IMR-90 (cell line): ENCODE measurements at regions of chr5 and their contacts with region 1.

Region 1: GRCh38 chr5:83430130-83431010 is 41.2 kb upstream of the VCAN start:
- DNase-seq: peak; percentile 69
- ATAC-seq: peak; percentile 89
- H3K4me3 ChIP-seq: no peak overlapping the region
- H3K27ac ChIP-seq: no peak overlapping the region
- H3K4me1 ChIP-seq: no peaks in the 10 kb centered on the region
- H3K27me3 ChIP-seq: no peaks in the 10 kb centered on the region
- CTCF ChIP-seq: peak; percentile 93
- POLR2A ChIP-seq: no peak
- RAD21 ChIP-seq: peak; percentile 89

Region 2: GRCh38 chr5:82793808-82794419 is 636.5 kb before region 1 on chr5:
- CTCF ChIA-PET with region 1: no interaction called
- POLR2A ChIA-PET with region 1: no interaction called
- dilution Hi-C with region 1: no loop called
- in situ Hi-C with region 1: no loop called
- intact Hi-C with region 1: loop called (anchors 10 kb)
- DNase-seq: peak; percentile 20
- ATAC-seq: no peak
- H3K4me3 ChIP-seq: no peak overlapping the region
- H3K27ac ChIP-seq: no peak overlapping the region
- H3K4me1 ChIP-seq: no peaks in the 10 kb centered on the region
- H3K27me3 ChIP-seq: no peaks in the 10 kb centered on the region
- CTCF ChIP-seq: peak; percentile 54
- POLR2A ChIP-seq: no peak
- RAD21 ChIP-seq: peak; percentile 51

Region 3: GRCh38 chr5:83058726-83059125 is 371.6 kb before region 1 on chr5:
- CTCF ChIA-PET with region 1: no interaction called
- POLR2A ChIA-PET with region 1: no interaction called
- dilution Hi-C with region 1: no loop called
- in situ Hi-C with region 1: no loop called
- intact Hi-C with region 1: loop called (anchors 5 kb)
- DNase-seq: no peak
- ATAC-seq: no peak
- H3K4me3 ChIP-seq: no peak overlapping the region
- H3K27ac ChIP-seq: no peak overlapping the region
- H3K4me1 ChIP-seq: no peaks in the 10 kb centered on the region
- H3K27me3 ChIP-seq: no peaks in the 10 kb centered on the region
- CTCF ChIP-seq: no peak
- POLR2A ChIP-seq: no peak
- RAD21 ChIP-seq: no peak

Region 4: GRCh38 chr5:83281658-83282057 is 148.7 kb before region 1 on chr5:
- CTCF ChIA-PET with region 1: no interaction called
- POLR2A ChIA-PET with region 1: no interaction called
- dilution Hi-C with region 1: no loop called
- in situ Hi-C with region 1: no loop called
- intact Hi-C with region 1: no loop called
- DNase-seq: peak; percentile 35
- ATAC-seq: peak; percentile 40; the same call in 1 of the 2 replicates
- H3K4me3 ChIP-seq: no peak overlapping the region
- H3K27ac ChIP-seq: no peak overlapping the region
- H3K4me1 ChIP-seq: no peaks in the 10 kb centered on the region; the same call in 1 of the 2 replicates
- H3K27me3 ChIP-seq: no peaks in the 10 kb centered on the region
- CTCF ChIP-seq: no peak
- POLR2A ChIP-seq: no peak
- RAD21 ChIP-seq: no peak